ENCODE measurements at regions of chr12 and their contacts with region 1.

Region 1: GRCh38 chr12:42589465-42590329 is at the start of gene PRICKLE1:
- DNase-seq: no peak
- H3K4me3 ChIP-seq: peak within 1 kb of the TSS; percentile 74 to 96 (median 83)
- H3K27ac ChIP-seq: peak within 1 kb of the TSS; percentile 64 to 85 (median 76)
- H3K4me1 ChIP-seq: peaks cover 23 to 55% (median 49%) of the 10 kb centered on the region in 4 donors
- H3K27me3 ChIP-seq: no peaks in the 10 kb centered on the region
- CTCF ChIP-seq: no peak
- EP300 ChIP-seq: no peak
- POLR2A ChIP-seq: no peak
- total RNA-seq, gene PRICKLE1: 12.5 to 36.9 (median 24.4) TPM

Region 2: DNA sequence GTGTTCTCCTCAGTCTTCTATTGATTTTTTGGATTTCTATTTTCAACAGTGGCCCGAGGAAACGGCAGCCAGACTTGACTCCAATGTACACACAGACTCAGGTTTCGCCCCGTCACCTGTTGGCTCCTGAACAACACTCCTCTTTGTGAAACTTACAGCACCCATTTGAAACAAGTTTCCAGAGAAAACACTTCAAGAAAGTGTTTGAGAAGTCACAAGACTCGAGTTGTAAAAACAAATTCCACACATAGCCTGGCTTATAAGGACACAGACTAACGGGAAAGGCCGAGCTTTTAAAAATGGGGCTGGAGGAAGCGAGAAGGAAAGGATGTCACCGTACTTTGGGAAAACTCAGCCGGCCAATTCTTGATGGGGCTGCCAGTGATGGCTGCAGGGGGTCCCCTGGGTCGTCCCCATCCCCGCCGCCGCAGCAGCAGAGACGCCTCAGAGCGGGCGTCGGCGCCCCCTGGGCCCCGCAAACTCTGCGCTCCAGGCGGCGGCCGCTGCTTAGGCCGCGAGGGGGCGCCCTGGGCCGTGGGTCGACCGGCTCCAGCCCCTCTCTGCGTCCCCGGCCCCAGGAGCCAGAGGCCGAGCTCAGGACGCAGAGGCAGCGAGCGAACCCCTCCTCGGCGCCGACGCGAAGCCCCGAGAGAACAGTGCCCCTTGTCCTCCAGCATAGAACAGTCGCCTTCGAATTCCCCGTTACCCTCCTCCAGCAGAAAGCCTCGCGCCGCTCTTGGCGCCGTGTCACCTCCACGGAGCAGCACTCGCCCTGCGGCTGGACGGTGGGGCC is 107.1 kb before region 1 on chr12:
- intact Hi-C with region 1: loop called (anchors 5 kb)
- DNase-seq: no peak
- H3K4me3 ChIP-seq: peak overlapping the region; percentile 76 to 94 (median 84)
- H3K27ac ChIP-seq: peak overlapping the region; percentile 88 to 97 (median 91)
- H3K4me1 ChIP-seq: peaks cover 27 to 39% (median 29%) of the 10 kb centered on the region in 4 donors
- H3K27me3 ChIP-seq: no peaks in the 10 kb centered on the region
- CTCF ChIP-seq: peak; percentile 81 to 98 (median 96)
- EP300 ChIP-seq: peak; percentile 12
- POLR2A ChIP-seq: no peak

Region 3: DNA sequence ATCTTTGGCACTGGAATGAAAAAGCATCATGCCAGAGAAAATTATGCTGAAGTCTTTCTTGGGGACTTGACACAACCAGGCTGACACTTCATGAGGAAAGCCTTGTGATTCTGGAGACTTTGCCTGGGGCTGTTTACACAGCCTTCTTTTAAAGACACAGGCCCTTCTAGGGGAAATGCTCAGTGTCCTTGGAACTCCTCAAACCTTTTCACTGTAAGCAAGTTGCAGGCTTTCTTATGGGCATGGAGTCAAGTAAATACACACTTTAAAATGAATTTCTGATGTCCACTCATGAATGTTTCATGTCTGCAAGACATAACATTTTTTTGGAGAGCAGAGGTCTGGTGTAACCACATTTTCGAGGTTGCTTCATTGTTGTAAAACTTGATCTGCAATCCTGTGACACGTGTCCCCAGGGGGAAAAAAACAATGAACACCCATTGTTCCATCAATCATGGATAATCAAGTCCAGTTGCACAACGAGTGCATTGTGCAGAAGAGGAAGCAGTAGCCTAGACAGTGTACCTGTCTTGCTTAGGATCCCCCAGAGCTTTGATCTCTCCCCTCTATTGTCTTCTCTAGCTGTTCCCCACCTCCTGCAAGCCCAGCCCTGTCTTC is 155.0 kb after region 1 on chr12:
- intact Hi-C with region 1: loop called (anchors 10 kb)
- DNase-seq: no peak
- H3K4me3 ChIP-seq: no peak overlapping the region
- H3K27ac ChIP-seq: peak overlapping the region in 1 of 4 donors; percentile 15
- H3K4me1 ChIP-seq: peaks cover 23 to 31% (median 29%) of the 10 kb centered on the region in 4 donors
- H3K27me3 ChIP-seq: no peaks in the 10 kb centered on the region
- CTCF ChIP-seq: no peak
- EP300 ChIP-seq: no peak
- POLR2A ChIP-seq: no peak

Region 4: GRCh38 chr12:42859612-42860011 is 269.9 kb after region 1 on chr12:
- intact Hi-C with region 1: loop called (anchors 10 kb)
- DNase-seq: no peak
- H3K4me3 ChIP-seq: peak overlapping the region in 1 of 4 donors; percentile 2
- H3K27ac ChIP-seq: peak overlapping the region; percentile 4 to 54 (median 38)
- H3K4me1 ChIP-seq: peaks cover 0 to 32% (median 25%) of the 10 kb centered on the region in 4 donors
- H3K27me3 ChIP-seq: no peaks in the 10 kb centered on the region
- CTCF ChIP-seq: no peak
- EP300 ChIP-seq: no peak
- POLR2A ChIP-seq: no peak

Region 5: GRCh38 chr12:43282106-43282505 is 692.4 kb after region 1 on chr12:
- intact Hi-C with region 1: loop called (anchors 5 kb)
- DNase-seq: no peak
- H3K4me3 ChIP-seq: no peak overlapping the region
- H3K27ac ChIP-seq: no peak overlapping the region
- H3K4me1 ChIP-seq: peaks cover 0 to 14% (median 6%) of the 10 kb centered on the region in 4 donors
- H3K27me3 ChIP-seq: no peaks in the 10 kb centered on the region
- CTCF ChIP-seq: peak; percentile 24 to 29 (median 26)
- EP300 ChIP-seq: no peak
- POLR2A ChIP-seq: no peak

Measured in esophagus muscularis mucosa (tissue), 4 donors.